MCF 10A (cell line): ENCODE measurements at regions of chr18 and their contacts with region 1.

Region 1: DNA sequence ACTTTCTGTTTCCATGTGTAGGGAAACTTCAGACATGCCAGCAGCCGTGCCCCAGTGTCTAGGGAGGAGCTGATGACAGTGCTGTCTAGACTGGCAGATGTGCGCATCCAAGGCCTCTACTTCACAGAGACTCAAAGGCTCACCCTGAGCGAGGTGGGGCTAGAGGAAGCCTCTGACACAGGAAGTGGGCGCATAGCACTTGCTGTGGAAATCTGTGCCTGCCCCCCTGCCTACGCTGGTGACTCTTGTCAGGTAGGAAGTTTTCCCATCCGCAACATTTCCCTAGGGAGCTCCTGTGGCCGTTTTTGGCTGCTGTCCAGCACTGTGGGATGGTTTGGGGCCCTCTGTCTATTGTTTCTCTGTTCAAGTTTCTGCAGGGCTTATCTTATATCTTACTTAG is 143.1 kb upstream of the TTC39C start:
- DNase-seq: peak; percentile 82
- H3K4me3 Mint-ChIP-seq: peak overlapping the region; percentile 90
- H3K27ac Mint-ChIP-seq: peak overlapping the region; percentile 98
- H3K4me1 Mint-ChIP-seq: peaks cover 33% of the 10 kb centered on the region
- H3K27me3 Mint-ChIP-seq: no peaks in the 10 kb centered on the region
- CTCF ChIP-seq: no peak

Region 2: DNA sequence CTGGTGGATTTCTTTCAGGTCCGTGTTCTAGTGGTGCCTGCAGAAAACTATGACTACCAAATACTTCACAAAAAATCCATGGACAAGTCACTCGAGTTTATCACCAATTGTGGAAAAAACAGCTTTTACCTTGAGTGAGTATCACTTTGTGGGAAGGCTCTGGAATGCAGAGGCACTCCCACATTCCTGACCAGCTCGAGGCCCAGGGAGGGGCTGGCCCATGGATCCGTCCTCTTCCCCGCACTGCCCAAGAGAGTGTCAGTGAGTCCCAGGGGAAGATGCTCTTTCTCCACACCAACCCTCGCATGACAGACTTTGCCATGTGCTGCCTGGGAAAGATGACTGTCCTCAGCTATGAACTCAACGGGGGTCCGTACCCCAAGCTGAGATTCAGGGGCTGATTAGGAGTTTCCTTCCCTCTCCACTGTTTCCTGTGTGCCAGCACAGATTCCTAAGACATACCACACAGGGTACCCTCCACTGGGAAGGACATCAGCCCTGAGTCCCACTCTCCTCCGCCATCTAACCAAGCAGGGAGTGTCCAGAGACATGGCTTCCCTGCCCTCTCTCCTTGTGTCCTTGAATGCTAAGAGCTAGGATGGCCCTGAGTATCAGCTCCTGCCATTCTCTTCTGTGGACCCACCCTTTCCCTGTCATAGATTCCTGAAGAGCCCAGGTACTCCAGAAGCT is 26.3 kb before region 1 on chr18:
- CTCF ChIA-PET with region 1: interaction called, 5 read pairs
- POLR2A ChIA-PET with region 1: interaction called, 70 read pairs
- intact Hi-C with region 1: no loop called
- DNase-seq: peak; percentile 49
- H3K4me3 Mint-ChIP-seq: peak overlapping the region; percentile 29
- H3K27ac Mint-ChIP-seq: peak overlapping the region; percentile 92
- H3K4me1 Mint-ChIP-seq: peaks cover 26% of the 10 kb centered on the region
- H3K27me3 Mint-ChIP-seq: no peaks in the 10 kb centered on the region
- CTCF ChIP-seq: no peak

Region 3: GRCh38 chr18:23883277-23883790 is 11.9 kb after region 1 on chr18:
- CTCF ChIA-PET with region 1: interaction called, 6 read pairs
- POLR2A ChIA-PET with region 1: interaction called, 123 read pairs
- intact Hi-C with region 1: no loop called
- DNase-seq: peak; percentile 80
- H3K4me3 Mint-ChIP-seq: peak overlapping the region; percentile 34
- H3K27ac Mint-ChIP-seq: peak overlapping the region; percentile 86
- H3K4me1 Mint-ChIP-seq: peaks cover 60% of the 10 kb centered on the region
- H3K27me3 Mint-ChIP-seq: no peaks in the 10 kb centered on the region
- CTCF ChIP-seq: no peak